Posterior vena cava (tissue), 2 donors: ENCODE measurements at regions of chr11 and their contacts with region 1.

Region 1: DNA sequence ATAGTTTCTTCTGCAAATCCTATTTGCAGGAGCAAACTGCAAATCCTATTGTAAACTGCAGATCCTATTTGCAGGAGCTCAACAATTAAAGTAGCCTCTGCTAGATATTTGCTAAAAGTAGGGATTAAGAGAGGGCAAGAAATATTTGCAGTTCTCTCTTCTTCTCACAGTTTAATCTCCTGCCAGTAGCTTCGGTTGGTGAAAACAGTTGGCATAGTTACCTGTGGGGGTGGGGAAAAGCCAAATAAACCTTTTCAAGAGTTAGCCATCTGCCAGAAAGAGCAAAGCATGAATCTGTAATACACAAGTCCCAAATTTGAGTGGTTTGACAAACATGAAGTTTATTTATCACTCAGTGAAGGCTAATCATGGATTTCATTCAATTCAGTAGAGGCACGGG is 942.5 kb downstream of the JRKL start:
- DNase-seq: no peak

Region 2: GRCh38 chr11:96827164-96827563 is 505.1 kb before region 1 on chr11:
- intact Hi-C with region 1: no loop called
- DNase-seq: no peak

Region 3: GRCh38 chr11:96841792-96842191 is 490.5 kb before region 1 on chr11:
- intact Hi-C with region 1: loop called in 1 of 2 experiments (anchors 5 kb)
- DNase-seq: no peak